B cell (primary cell): ENCODE measurements at regions of chr15 and their contacts with region 1.

Region 1: DNA sequence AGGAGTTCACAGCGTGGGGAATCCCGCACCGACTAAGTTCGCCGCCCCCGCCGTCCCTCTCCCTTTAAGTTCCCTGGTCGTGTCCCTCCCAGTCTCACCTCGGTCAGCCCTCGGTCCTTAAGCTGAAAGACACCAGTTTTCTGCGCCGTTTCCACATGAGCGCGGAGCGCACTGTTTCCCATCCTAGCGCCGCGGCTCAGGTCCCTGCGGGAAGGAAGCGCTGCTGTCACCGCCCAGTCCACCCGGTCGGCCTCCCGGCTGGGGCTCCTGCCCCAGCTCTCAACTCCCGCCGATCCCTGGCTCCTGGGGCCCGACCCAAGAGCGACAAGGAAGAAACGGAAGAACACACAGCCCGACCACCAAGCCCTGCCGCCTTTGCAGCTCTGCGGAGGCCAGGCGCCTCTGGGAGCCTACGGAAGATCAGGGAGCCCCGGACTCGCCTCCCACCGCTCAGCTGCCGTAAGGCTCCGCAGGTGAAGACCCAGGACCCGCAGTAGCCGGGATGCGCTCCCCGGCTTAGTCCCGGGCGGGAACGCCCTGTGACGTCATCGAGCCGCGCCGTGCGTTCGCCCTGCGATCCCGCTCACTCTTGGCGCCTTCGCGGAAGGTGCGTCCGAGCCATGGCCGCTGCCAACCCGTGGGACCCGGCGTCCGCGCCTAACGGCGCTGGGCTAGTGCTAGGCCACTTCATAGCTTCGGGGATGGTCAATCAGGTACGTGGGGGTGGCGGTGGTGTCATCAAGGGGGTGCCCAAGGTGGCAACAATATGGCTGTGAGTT is at the starts of genes HAUS2 and LRRC57:
- DNase-seq: peak; percentile 91
- ATAC-seq: peak; percentile 86
- H3K4me3 ChIP-seq: peak within 1 kb of the TSS; percentile 99 to 100 (median 99)
- H3K4me3 Mint-ChIP-seq: peak within 1 kb of the TSS; percentile 96
- H3K27ac ChIP-seq: peak within 1 kb of the TSS; percentile 86 to 92
- H3K27ac Mint-ChIP-seq: peak within 1 kb of the TSS; percentile 93
- H3K4me1 ChIP-seq: peaks cover 20 to 26% of the 10 kb centered on the region in 2 donors
- H3K4me1 Mint-ChIP-seq: peaks cover 40% of the 10 kb centered on the region
- H3K27me3 ChIP-seq: no peaks in the 10 kb centered on the region
- H3K27me3 Mint-ChIP-seq: no peaks in the 10 kb centered on the region
- CTCF ChIP-seq: no peak
- total RNA-seq, gene HAUS2: 14.0 and 16.5 TPM in 2 replicates
- total RNA-seq, gene LRRC57: 17.8 and 25.4 TPM in 2 replicates

Region 2: DNA sequence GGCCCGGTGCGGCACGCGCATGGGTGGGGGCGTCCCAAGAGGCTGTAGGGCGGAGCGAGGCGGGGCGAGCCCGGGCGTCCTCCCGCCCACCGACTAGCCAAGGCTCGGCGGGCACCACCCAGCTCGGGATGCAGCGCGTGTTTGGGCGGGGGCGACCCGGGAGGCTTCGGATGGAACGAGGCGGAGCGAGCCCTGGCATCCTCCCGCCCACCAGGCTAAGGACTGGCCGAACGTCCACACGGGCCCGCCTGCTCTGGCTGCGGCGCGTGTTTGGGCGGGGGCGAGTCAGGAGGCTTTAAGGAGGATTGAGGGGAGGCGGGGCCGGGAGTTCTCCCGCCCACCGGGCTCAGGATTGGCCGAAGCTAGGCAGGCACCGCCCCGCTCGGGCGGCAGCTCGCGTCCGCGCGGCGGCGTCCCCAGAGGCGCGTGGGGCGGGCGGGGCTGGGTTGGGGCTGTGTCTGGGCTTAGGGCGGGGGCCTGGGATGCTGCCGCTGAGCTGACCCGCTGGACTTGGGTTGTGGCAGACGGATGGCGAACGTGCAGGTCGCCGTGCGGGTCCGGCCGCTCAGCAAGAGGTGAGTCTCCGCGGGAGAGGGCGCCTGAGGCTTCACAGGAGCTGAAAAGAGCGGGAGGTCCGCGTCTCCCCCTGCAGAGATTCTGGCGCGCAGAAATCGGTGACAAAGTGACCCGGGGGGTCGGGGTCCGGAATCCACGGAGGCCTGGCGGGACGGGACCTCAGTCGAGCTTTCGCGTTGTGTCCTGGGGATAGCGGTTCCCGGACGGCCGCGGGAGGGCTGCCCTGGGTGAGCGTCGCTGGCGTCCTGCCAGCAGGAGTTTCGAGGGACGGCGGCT is 27.0 kb after region 1 on chr15 and contains the start of gene STARD9:
- CTCF ChIA-PET with region 1: no interaction called
- POLR2A ChIA-PET with region 1: interaction called, 9 read pairs
- intact Hi-C with region 1: loop called (anchors 1 kb)
- DNase-seq: peak; percentile 98
- ATAC-seq: peak; percentile 88
- H3K4me3 ChIP-seq: peak within 1 kb of the TSS; percentile 61 to 93 (median 88)
- H3K4me3 Mint-ChIP-seq: peak within 1 kb of the TSS; percentile 96
- H3K27ac ChIP-seq: peak within 1 kb of the TSS; percentile 67 to 69
- H3K27ac Mint-ChIP-seq: peak within 1 kb of the TSS; percentile 89
- H3K4me1 ChIP-seq: peaks cover 14 to 15% of the 10 kb centered on the region in 2 donors
- H3K4me1 Mint-ChIP-seq: peaks cover 19% of the 10 kb centered on the region
- H3K27me3 ChIP-seq: peaks cover 0 to 4% (median 0%) of the 10 kb centered on the region in 4 experiments
- H3K27me3 Mint-ChIP-seq: peaks cover 9% of the 10 kb centered on the region
- CTCF ChIP-seq: no peak
- total RNA-seq, gene STARD9: 20.8 and 23.1 TPM in 2 replicates

Region 3: DNA sequence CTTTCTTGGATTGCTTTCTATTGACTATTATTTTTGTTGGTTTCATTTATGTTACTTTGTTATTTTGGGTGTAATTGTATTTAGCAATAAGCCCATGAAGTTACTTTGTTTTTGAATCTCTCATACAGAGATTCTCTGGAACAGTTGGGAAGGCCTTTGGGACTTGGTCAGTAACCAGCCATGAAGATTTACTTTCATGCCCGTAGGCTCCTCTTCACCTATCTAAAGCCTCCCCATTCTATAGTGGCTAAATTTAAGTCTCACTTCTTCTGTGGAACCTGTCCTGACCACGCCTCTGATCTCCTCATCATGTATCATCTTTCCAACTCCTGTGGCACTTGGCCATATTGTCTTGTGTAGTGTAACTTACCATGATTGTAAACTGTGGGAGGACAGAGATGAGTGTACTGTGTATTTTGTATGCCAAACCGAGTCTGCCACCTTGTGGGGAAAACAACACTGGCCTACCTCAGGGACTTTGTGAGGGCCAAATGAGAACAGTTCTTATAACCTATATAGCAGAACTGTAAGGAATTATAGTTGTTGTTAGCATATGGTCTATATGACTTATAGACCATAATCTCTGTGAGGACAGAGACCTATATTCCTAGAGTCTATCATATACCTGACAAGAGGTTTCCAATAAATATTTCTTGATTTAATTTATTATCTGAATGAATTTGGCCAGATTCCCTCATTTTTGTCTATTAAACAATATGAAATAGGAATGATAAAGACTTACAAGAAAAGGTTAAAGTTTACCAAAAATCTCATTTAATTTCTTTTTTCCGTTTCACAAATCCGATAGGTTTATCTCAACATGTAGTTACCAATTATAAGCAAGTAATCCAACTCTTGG is 102.0 kb after region 1 on chr15:
- CTCF ChIA-PET with region 1: interaction called, 6 read pairs
- POLR2A ChIA-PET with region 1: no interaction called
- intact Hi-C with region 1: loop called (anchors 2 kb)
- DNase-seq: peak; percentile 67
- ATAC-seq: peak; percentile 70
- H3K4me3 ChIP-seq: no peak overlapping the region
- H3K4me3 Mint-ChIP-seq: no peak overlapping the region
- H3K27ac ChIP-seq: no peak overlapping the region
- H3K27ac Mint-ChIP-seq: no peak overlapping the region
- H3K4me1 ChIP-seq: no peaks in the 10 kb centered on the region
- H3K4me1 Mint-ChIP-seq: no peaks in the 10 kb centered on the region
- H3K27me3 ChIP-seq: no peaks in the 10 kb centered on the region
- H3K27me3 Mint-ChIP-seq: no peaks in the 10 kb centered on the region
- CTCF ChIP-seq: peak; percentile 63